GM12878 (cell line): ENCODE measurements at regions of chr15 and their contacts with region 1.

Region 1: GRCh38 chr15:52124270-52124880 is 11.8 kb upstream of the BCL2L10 start:
- DNase-seq: no peak
- ATAC-seq: peak; percentile 50
- H3K4me3 ChIP-seq: no peak overlapping the region
- H3K27ac ChIP-seq: no peak overlapping the region
- H3K4me1 ChIP-seq: no peaks in the 10 kb centered on the region
- H3K27me3 ChIP-seq: no peaks in the 10 kb centered on the region
- CTCF ChIP-seq: no peak
- EP300 ChIP-seq: no peak
- POLR2A ChIP-seq: no peak
- RAD21 ChIP-seq: no peak

Region 2: GRCh38 chr15:52112203-52112750 is 12.1 kb before region 1 on chr15:
- CTCF ChIA-PET with region 1: interaction called, 7 read pairs
- POLR2A ChIA-PET with region 1: interaction called, 7 read pairs
- RAD21 ChIA-PET with region 1: interaction called, 7 read pairs
- SMC1A ChIA-PET with region 1: interaction called, 11 read pairs
- in situ Hi-C with region 1: no loop called
- intact Hi-C with region 1: no loop called
- DNase-seq: no peak
- ATAC-seq: peak; percentile 15
- H3K4me3 ChIP-seq: peak overlapping the region; percentile 72; the same call in 1 of the 2 replicates
- H3K27ac ChIP-seq: peak overlapping the region; percentile 94
- H3K4me1 ChIP-seq: peaks cover 42% of the 10 kb centered on the region
- H3K27me3 ChIP-seq: no peaks in the 10 kb centered on the region
- CTCF ChIP-seq: peak in 1 of 3 experiments; percentile 15; a peak in 1 of 6 replicates
- EP300 ChIP-seq: no peak
- POLR2A ChIP-seq: peak; percentile 79
- RAD21 ChIP-seq: no peak

Region 3: DNA sequence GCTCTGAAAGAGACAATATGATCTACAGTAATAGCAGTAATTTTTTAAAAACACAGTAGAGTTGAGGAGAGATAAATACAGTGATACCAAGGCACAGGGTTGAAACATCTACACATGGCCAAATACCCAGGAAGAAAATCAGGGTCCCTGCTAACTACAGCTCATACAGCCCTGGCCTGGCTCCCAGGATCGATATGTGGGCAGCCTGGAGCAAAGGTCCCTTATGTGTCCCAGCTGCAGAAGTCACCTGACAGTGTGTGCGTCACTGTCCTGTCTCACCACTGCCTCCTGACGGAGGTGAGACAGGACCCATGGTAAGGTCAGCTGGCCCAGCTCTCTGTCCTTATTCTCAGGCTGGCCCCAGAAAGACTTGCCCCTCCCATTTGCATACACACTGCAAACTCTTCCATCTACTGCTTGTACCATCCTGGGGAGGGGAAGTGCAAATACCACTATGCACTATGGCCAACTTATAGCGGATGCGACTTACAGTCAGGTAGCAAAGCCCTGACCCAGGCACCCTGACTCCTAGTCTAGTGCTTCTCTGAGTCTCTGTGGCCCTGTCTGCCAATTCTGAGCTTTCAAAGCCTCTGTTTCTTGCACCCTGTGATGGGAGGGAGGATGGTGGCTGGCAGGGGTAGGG is 10.2 kb after region 1 on chr15:
- CTCF ChIA-PET with region 1: interaction called, 9 read pairs
- POLR2A ChIA-PET with region 1: interaction called, 3 read pairs
- RAD21 ChIA-PET with region 1: no interaction called
- SMC1A ChIA-PET with region 1: interaction called, 19 read pairs
- in situ Hi-C with region 1: no loop called
- intact Hi-C with region 1: no loop called
- DNase-seq: no peak
- ATAC-seq: no peak
- H3K4me3 ChIP-seq: no peak overlapping the region
- H3K27ac ChIP-seq: no peak overlapping the region
- H3K4me1 ChIP-seq: peaks cover 34% of the 10 kb centered on the region
- H3K27me3 ChIP-seq: no peaks in the 10 kb centered on the region
- CTCF ChIP-seq: no peak
- EP300 ChIP-seq: no peak
- POLR2A ChIP-seq: no peak
- RAD21 ChIP-seq: no peak

Region 4: DNA sequence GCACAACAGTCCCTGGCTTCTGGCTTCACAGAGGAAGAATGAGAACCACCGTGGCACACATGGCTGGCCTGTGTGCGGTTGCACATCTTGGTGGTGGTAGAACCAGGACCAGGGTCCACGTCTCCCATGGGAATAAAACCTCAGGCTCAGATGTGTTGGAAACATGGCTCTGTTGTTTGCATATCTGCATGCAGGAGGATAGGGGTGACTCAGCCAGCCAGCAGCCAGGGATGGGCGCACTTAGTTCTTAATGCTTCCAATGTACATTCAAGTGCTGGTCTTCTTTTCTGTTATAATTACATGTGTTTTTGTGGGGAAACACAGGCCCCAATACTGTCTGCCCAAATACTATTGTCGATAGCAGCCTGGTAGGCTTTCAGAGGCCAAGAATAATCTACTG is 24.0 kb after region 1 on chr15:
- CTCF ChIA-PET with region 1: no interaction called
- POLR2A ChIA-PET with region 1: no interaction called
- RAD21 ChIA-PET with region 1: no interaction called
- SMC1A ChIA-PET with region 1: no interaction called
- in situ Hi-C with region 1: no loop called
- intact Hi-C with region 1: no loop called
- DNase-seq: no peak
- ATAC-seq: no peak
- H3K4me3 ChIP-seq: no peak overlapping the region
- H3K27ac ChIP-seq: no peak overlapping the region
- H3K4me1 ChIP-seq: no peaks in the 10 kb centered on the region
- H3K27me3 ChIP-seq: no peaks in the 10 kb centered on the region
- CTCF ChIP-seq: no peak
- EP300 ChIP-seq: no peak
- POLR2A ChIP-seq: no peak
- RAD21 ChIP-seq: no peak